Heart right ventricle (tissue), 16 donors: ENCODE measurements at regions of chr11 and their contacts with region 1.

Region 1: DNA sequence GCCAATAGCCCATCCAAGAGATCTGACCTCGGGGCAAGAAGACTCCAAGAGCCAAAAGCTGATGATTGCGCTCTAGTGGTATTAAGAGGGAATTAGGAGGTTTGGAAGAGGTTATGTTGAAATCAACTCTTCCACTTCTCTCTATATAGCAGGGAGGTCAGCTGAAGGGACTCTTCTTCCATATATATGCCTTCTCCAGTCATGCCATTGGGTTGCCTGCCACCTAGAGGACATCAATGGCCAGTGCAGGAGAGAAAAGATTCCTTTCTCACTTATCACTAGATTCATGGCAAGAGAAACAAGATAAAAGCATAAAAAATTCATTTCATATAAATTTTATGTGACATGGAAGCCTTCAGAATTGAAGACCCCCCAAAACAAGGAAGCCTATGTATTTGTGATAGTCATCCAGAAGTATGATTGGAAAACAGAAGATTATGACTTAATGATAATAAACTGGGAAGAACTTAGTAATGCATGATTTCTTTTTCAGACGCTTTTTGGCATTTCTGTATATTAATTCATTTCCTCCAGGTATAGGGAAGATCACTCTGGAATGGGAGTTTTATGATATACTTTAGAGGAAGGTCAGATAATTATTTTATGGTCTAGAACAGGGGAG is 435.1 kb upstream of the DDI1 start:
- DNase-seq: peak in 1 of 2 donors; percentile 11
- ATAC-seq: peak in 5 of 8 donors; percentile 43 to 79 (median 61)
- H3K4me3 ChIP-seq: no peak overlapping the region
- H3K27ac ChIP-seq: no peak overlapping the region
- H3K4me1 ChIP-seq: no peaks in the 10 kb centered on the region
- H3K27me3 ChIP-seq: no peaks in the 10 kb centered on the region
- CTCF ChIP-seq: peak; percentile 78 to 95 (median 85)

Region 2: DNA sequence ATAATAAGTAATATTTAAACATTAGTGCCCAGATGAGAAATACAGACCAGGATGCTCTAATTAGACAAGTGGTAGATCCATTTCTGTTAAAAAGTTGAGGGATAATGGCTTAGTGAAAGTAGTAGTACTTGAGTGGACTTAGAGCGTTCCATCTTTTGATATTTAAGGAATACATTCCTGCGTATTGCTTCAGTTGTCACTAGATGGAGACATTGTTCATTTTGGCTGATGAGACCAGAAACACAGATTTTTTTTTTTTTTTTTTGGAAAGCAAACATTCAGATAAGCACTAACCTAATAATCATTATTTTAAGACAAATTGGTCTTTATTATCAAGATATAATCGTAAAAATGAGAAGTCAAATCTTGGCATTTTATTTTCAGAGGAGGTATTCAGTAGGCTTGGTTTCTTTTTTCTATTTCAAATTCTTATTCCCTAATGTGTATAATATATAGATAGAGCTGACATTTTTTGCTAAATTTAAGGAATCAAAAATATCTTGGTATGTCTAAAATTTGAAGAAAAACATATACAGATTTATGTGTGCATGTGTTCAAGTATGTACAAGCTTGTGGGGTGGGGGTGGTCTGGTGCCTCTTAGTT is 399.2 kb before region 1 on chr11:
- intact Hi-C with region 1: loop called in 8 of 10 experiments (anchors 2 to 10 kb)
- DNase-seq: no peak
- ATAC-seq: no peak
- H3K4me3 ChIP-seq: no peak overlapping the region
- H3K27ac ChIP-seq: no peak overlapping the region
- H3K4me1 ChIP-seq: no peaks in the 10 kb centered on the region
- H3K27me3 ChIP-seq: no peaks in the 10 kb centered on the region
- CTCF ChIP-seq: peak in 8 of 9 donors; percentile 24 to 64 (median 54)

Region 3: GRCh38 chr11:103257360-103257759 is 344.0 kb before region 1 on chr11:
- intact Hi-C with region 1: loop called in 1 of 10 experiments (anchors 5 kb)
- DNase-seq: no peak
- ATAC-seq: no peak
- H3K4me3 ChIP-seq: no peak overlapping the region
- H3K27ac ChIP-seq: no peak overlapping the region
- H3K4me1 ChIP-seq: no peaks in the 10 kb centered on the region
- H3K27me3 ChIP-seq: no peaks in the 10 kb centered on the region
- CTCF ChIP-seq: peak in 6 of 9 donors; percentile 10 to 44 (median 18)

Region 4: DNA sequence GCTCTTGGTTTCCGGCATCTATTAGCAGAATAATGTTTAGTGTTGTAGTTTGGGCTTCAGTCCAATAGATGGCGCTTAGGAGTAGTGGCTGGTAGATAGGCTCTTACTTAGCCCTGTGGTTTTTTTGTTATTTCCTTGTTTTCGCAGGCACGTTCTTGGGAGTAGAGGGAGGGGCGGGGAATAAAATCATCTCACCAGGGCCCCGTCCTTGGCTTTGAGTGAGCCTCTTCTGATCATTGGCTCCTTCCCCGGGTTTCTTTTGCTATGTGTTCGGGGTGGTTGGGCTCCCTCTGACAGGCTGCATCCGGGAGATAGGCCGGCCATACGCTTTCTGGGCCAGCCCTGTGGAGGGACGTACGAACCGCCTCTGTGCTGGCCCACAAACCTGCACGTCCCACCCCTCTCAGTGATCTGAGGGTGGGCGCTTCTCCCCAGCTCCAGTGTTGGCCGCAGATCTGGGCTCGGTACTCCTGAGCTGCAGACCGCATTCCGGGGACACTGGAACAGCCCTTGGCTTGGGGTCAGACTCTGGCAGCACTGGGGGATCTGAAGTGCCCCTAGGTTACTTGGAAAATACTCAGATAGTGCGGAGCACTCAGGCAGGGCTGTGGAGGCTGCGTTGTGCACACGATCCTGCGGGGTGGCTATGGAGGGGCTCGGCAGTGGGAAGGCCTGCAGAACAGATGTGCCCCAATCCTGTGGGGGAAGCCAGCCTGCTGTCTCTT is 275.1 kb before region 1 on chr11:
- intact Hi-C with region 1: loop called in 9 of 10 experiments (anchors 2 to 10 kb)
- DNase-seq: peak in 1 of 2 donors; percentile 42
- ATAC-seq: peak; percentile 38 to 79 (median 76)
- H3K4me3 ChIP-seq: no peak overlapping the region
- H3K27ac ChIP-seq: no peak overlapping the region
- H3K4me1 ChIP-seq: peaks cover 0 to 17% (median 7%) of the 10 kb centered on the region in 9 donors
- H3K27me3 ChIP-seq: no peaks in the 10 kb centered on the region
- CTCF ChIP-seq: peak; percentile 31 to 75 (median 63)

Region 5: DNA sequence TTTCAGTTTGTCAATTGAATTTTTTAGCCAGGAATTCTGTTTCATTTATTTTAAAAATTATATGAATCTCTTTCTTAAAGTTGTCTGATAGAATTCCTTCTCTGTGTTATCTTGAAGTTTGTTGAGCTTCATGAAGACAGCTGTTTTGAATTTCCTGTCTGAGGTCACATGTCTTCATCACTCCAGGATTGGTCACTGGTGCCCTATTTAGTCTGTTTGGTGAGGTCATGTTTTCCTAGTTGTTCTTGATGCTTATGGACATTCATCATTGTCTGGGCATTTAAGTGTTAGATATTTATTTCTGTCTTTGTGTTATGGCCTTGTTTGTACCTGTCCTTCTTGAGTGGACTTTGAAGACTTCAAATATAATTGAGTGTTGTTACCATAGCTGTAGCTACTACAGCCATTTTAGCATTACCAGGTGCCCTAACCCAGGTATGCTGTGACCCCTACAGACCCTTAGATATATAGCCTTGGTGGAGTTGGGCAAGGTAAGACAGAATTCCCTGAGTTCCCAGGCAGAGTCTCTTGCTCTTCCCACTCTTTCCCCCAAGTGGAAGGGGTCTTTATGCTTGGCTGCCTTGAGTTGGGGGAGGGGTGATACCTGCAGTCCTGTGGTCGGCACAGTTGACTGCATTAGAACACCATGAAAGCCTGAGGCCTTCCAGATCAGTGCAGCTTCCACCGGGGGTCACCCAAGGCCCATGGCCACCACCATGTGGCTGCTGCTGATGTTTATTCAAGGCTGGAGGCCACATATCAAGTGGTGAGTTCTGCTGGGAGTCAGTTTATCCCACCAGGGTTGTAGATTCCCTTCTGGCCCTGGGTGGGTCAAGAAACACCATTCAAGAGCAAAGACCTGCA is 262.5 kb before region 1 on chr11:
- intact Hi-C with region 1: loop called in 1 of 10 experiments (anchors 10 kb)
- DNase-seq: no peak
- ATAC-seq: no peak
- H3K4me3 ChIP-seq: no peak overlapping the region
- H3K27ac ChIP-seq: no peak overlapping the region
- H3K4me1 ChIP-seq: no peaks in the 10 kb centered on the region
- H3K27me3 ChIP-seq: no peaks in the 10 kb centered on the region
- CTCF ChIP-seq: no peak

Region 6: DNA sequence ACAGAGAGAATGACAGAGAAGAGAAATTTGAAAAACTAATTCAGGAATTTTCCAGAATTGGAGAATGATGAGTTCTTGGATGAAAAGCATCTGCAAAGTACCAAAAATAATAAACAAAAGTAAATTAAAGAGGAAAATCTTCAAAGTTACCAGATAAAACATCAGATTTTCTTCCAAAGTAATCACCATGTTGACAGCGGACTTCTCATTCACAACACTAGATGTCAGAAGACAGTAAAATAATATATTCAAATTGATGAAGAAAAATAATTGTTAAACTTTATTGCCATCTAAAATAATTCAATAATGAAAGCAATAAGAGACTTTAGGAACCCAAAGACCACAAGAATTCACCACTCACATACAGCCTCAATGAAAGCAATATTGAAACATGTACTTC is 136.9 kb before region 1 on chr11:
- intact Hi-C with region 1: loop called in 4 of 10 experiments (anchors 10 kb)
- DNase-seq: no peak
- ATAC-seq: no peak
- H3K4me3 ChIP-seq: no peak overlapping the region
- H3K27ac ChIP-seq: no peak overlapping the region
- H3K4me1 ChIP-seq: peaks cover 0 to 5% (median 0%) of the 10 kb centered on the region in 9 donors
- H3K27me3 ChIP-seq: no peaks in the 10 kb centered on the region
- CTCF ChIP-seq: peak in 2 of 9 donors; percentile 3 to 11